ENCODE measurements at regions of chr2 and their contacts with region 1.

Region 1: GRCh38 chr2:67309281-67309680 is 87.9 kb upstream of the ETAA1 start:
- DNase-seq: no peak
- H3K4me3 ChIP-seq: no peak overlapping the region
- H3K27me3 ChIP-seq: no peaks in the 10 kb centered on the region
- CTCF ChIP-seq: no peak

Region 2: DNA sequence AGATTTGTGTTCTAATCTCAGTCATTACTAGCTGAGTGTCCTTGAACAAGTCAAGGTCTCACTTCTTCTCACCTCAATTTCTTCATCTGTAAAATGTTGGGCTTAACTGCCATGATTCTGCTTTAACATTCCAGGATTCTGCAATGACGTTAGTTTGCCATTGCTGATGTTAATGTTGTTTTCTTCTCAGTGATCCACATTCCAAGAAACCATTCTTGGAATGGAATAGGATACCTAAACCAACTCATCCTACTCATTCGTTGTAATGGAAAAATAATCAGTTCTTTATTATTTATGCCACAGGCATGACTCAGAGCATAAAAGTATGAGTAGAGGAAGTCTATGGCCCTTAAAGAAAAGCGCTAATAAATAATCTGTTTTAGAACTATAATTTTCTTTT is 52.4 kb before region 1 on chr2:
- CTCF ChIA-PET with region 1: no interaction called
- POLR2A ChIA-PET with region 1: interaction called, 10 read pairs
- DNase-seq: peak; percentile 25
- H3K4me3 ChIP-seq: no peak overlapping the region
- H3K27me3 ChIP-seq: no peaks in the 10 kb centered on the region
- CTCF ChIP-seq: no peak

Measured in BJ (cell line).